Heart right ventricle (tissue), 16 donors: ENCODE measurements at regions of chr11 and their contacts with region 1.

Region 1: GRCh38 chr11:124961972-124962609 is 8.1 kb downstream of the CCDC15 start:
- DNase-seq: peak in 1 of 2 donors; percentile 21
- ATAC-seq: peak in 7 of 8 donors; percentile 67 to 87 (median 75)
- H3K4me3 ChIP-seq: no peak overlapping the region
- H3K27ac ChIP-seq: no peak overlapping the region
- H3K4me1 ChIP-seq: no peaks in the 10 kb centered on the region
- H3K27me3 ChIP-seq: no peaks in the 10 kb centered on the region
- CTCF ChIP-seq: peak; percentile 28 to 80 (median 72)

Region 2: DNA sequence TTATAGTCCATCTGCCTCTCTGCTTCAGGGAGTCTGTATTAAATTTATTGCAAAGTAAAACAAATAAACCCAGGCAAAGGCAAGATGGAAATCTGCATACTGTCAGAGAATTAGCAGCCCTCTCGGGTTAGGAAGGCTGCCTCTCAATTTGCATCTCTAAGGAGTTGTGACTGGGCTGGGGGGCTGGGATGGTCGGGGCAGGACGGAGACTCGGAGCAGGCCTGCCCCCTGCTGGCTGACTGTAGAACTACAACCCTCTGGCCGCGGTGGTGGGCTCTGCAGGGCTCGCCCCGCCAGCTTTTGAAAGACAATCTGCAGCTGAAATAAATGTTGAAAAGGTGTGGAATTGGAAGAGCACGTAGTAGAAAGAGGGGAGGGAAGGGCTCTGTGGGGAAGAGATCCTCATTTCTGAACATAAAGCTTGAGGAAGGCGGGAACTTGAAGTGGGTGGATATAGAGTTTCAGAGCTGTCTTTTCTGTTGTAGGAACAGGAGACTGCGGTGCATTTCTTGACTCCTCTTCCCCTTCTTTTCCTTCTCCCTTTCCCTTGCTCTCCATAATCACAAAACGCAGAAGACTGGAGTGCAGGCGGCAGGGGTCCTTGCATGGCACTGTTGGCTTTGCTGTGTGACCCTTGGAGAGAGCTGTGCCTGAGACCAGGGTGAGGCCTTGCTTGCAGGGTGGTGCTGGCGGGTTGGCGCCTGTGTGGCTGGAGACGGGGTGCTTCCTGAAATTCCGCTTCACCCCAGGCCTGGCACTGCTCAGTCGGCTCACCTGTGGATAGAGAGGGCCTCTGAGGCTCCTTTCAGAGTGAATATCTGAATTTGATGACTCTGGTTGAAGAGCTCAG is 179.8 kb after region 1 on chr11:
- intact Hi-C with region 1: loop called in 8 of 10 experiments (anchors 2 to 10 kb)
- DNase-seq: peak; percentile 15 to 52
- ATAC-seq: peak; percentile 71 to 82 (median 76)
- H3K4me3 ChIP-seq: no peak overlapping the region
- H3K27ac ChIP-seq: no peak overlapping the region
- H3K4me1 ChIP-seq: peaks cover 0 to 8% (median 0%) of the 10 kb centered on the region in 9 donors
- H3K27me3 ChIP-seq: peaks cover 0 to 35% (median 23%) of the 10 kb centered on the region in 7 donors
- CTCF ChIP-seq: peak; percentile 83 to 98 (median 94)

Region 3: DNA sequence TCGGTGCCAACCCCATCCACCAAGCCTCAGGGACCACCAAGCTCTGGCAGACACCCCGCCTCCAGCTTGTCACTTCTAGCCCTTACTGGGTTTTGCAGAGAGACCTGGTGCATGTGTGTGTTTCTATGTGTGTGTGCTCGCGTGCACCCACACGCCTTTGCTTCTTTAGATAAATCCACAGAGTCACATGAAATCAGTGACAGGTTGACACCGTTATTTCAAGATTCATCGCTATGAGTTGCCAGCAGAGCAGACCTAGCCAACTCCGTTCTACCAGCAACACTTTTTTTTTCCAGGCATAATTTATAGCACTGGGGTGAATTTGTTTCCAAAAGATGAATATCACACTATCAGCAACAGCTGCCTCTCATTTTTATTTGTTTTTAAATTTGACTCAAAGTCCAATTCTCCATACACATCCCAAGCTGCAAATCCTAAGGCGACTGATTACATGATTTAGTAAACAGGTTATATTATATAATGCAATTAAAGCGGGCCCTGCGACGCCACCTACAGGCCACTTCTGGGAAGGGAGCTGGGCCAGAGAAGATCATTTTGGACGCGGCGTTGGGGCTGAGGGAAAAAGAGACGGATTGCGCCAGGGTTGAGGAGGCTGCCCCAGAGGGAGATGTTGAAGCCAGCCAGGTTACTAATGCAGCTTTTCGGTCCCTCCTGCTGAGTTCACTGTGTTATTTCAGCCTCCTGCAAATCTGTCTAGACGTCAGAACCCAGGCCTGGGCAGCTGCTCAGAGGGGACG is 383.5 kb after region 1 on chr11:
- intact Hi-C with region 1: loop called in 4 of 10 experiments (anchors 10 kb)
- DNase-seq: peak; percentile 81 to 85
- ATAC-seq: peak; percentile 76 to 88 (median 82)
- H3K4me3 ChIP-seq: no peak overlapping the region
- H3K27ac ChIP-seq: peak overlapping the region in 9 of 10 donors; percentile 31 to 81 (median 64)
- H3K4me1 ChIP-seq: peaks cover 3 to 43% (median 23%) of the 10 kb centered on the region in 9 donors
- H3K27me3 ChIP-seq: no peaks in the 10 kb centered on the region
- CTCF ChIP-seq: peak; percentile 75 to 93 (median 88)

Region 4: DNA sequence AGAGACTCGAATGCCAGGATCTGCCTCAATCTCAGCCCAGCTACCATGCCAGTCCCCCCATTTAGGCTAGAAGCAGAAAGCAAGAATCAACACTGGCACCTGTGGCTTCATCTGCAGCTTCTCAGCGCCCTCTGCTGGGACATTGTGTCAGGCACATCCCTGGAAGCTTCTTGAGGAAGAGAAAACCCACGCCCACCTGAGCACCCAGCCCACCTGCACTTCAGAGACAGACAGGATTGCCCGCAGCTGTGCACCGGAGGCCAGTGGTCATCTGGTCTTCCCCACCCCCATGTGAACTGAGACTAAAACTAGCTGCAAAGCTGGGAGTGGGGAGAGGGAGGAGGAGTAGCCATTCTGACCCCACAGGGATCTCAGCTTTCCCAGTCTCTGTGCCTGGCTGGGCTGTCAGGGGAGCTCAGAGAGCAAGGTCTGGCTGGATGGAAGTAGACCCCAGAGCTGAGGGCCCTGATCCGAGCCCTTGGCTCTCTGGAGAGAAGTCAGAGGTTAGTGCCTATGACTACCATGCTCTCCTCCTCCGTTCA is 467.1 kb after region 1 on chr11:
- intact Hi-C with region 1: loop called in 3 of 10 experiments (anchors 10 kb)
- DNase-seq: peak; percentile 53 to 64
- ATAC-seq: peak in 1 of 8 donors; percentile 57
- H3K4me3 ChIP-seq: no peak overlapping the region
- H3K27ac ChIP-seq: no peak overlapping the region
- H3K4me1 ChIP-seq: peaks cover 0 to 44% (median 16%) of the 10 kb centered on the region in 9 donors
- H3K27me3 ChIP-seq: no peaks in the 10 kb centered on the region
- CTCF ChIP-seq: peak; percentile 39 to 74 (median 65)

Region 5: GRCh38 chr11:125874556-125875124 is 912.5 kb after region 1 on chr11:
- intact Hi-C with region 1: loop called in 5 of 10 experiments (anchors 5 to 10 kb)
- DNase-seq: peak in 1 of 2 donors; percentile 67
- ATAC-seq: peak; percentile 67 to 95 (median 92)
- H3K4me3 ChIP-seq: peak overlapping the region in 6 of 10 donors; percentile 12 to 42 (median 22)
- H3K27ac ChIP-seq: no peak overlapping the region
- H3K4me1 ChIP-seq: peaks cover 0 to 4% (median 0%) of the 10 kb centered on the region in 9 donors
- H3K27me3 ChIP-seq: no peaks in the 10 kb centered on the region
- CTCF ChIP-seq: peak; percentile 51 to 85 (median 75)